ENCODE measurements at regions of chr5 and their contacts with region 1.

Region 1: DNA sequence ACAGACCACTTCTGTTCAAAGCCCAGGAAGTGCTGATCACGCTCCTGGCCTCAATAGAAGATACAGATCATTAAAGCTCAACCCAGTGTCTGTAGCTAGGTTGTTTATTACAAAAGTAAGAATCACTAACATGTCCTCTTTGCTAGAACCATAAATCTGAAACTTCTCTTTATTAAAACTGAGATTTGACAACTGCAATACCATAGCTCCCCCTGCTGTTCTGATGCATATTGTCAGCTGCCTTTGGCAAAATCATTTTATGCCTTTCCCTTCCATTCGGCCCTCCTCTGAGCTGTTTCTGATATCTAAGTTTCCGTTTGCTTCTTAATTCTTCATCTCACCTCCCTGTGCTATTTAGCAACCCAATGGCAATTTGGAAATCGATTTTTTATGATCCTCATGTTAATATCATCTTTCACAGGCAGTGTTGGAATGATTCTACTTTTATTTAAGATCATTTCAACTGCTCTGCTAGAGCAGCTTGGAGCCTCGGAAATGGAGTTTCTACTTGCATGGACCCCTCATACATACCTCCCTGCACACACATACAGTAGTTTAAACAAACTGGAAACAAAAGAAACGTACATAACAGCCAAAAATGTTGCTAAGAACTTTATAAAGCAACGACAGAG is 998.8 kb downstream of the MAT2B start:
- DNase-seq: no peak
- ATAC-seq: no peak
- H3K4me3 ChIP-seq: no peak overlapping the region
- H3K27ac ChIP-seq: no peak overlapping the region
- H3K4me1 ChIP-seq: no peaks in the 10 kb centered on the region
- H3K27me3 ChIP-seq: no peaks in the 10 kb centered on the region

Region 2: DNA sequence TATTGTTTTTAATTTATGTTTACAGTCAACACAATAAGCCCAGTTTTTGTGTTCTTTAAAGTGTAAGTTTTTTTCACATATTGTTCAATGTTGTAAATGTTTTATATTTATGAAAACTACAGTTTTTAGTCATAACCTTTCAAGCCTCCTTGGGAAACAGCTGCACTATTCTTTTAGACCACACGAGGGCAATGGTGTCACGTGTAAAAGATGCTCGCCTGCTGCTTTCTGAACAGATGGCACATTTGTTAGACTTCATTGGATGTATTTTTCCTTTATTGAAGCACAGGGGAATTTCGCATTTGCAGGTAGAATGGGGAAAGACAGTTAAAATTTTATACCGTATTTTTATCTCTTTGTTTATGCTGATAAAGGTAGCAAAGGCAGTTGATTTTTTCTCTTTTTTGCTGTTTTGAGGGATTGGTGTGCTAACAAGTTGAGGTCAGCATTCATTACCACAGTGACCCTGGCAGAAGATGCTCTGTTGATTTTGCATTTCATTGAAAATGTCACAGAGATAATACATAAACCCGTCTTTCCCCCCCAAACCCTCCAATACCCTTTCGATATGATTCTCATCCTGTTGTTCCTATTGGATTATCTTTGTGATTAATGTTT is 939.8 kb before region 1 on chr5:
- intact Hi-C with region 1: loop called in 3 of 4 experiments (anchors 5 to 10 kb)
- DNase-seq: peak in 2 of 3 donors; percentile 22 to 46
- ATAC-seq: peak in 1 of 2 donors; percentile 46
- H3K4me3 ChIP-seq: no peak overlapping the region
- H3K27ac ChIP-seq: no peak overlapping the region
- H3K4me1 ChIP-seq: peaks cover 3% of the 10 kb centered on the region
- H3K27me3 ChIP-seq: no peaks in the 10 kb centered on the region

Region 3: DNA sequence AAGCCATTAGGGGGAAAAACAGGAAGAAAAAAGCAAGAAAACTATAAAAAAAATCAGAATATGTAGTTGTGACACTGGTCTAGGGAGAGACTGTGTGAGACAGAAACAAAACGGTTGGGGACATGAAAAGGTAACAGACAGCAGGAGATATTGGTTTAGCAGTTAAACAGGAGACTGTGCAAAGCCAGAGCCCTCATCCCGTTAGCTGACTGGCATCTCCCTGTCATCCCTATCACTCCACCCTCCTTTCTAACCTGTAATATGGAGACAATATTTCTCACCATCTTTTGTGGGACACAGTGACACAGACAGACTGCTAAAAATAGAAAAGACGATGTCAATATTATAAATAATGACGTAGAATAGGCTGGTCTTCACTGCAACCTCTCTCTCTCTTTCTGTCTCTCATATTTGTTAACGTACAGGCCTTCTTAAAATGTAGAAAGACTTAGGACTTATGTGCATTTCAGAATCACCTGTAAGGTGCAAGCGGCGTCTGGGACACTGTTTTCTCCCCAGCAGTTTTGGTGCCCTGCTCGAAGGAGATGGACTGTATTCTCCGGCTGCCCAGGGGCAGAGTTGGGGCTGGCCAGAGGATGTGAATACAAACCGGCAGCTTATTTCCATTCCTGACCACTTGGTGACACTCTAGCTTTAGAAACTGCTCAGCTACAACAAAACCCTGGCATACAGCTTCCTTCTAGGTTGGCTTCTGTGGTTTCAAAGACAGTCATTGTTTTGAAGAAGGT is 808.3 kb before region 1 on chr5:
- intact Hi-C with region 1: loop called in 2 of 4 experiments (anchors 10 kb)
- DNase-seq: no peak
- ATAC-seq: peak; percentile 71 to 76
- H3K4me3 ChIP-seq: no peak overlapping the region
- H3K27ac ChIP-seq: no peak overlapping the region
- H3K4me1 ChIP-seq: no peaks in the 10 kb centered on the region
- H3K27me3 ChIP-seq: no peaks in the 10 kb centered on the region

Region 4: DNA sequence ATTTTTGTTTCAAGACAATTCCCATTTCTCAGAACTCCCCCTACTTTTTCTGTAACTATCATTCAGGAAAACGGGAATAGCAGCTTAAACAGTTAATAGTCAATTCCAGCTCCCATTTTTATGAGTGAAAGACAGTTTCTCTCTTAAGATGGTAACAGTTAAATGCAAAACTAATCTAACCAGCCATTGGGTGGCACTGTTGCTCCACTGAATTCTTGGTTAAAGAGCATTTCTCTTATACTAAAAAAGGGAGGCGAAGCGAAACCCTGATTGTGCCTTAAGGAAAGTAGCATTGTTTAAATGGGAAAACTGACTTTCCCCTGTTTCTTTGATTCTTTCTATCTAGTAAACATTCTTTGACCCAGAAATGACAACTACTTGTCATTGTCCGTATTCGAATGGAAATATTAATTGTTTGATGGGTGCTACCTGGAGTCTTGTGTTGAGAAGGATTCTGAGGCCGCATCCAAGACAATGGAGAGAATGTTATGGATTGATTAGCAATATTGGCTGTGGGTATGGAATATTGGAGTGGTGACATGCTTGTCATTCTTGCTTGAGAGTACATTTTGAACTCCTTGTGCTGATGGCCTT is 491.1 kb before region 1 on chr5:
- intact Hi-C with region 1: loop called (anchors 5 to 10 kb)
- DNase-seq: peak in 1 of 3 donors; percentile 20
- ATAC-seq: peak in 1 of 2 donors; percentile 40
- H3K4me3 ChIP-seq: no peak overlapping the region
- H3K27ac ChIP-seq: no peak overlapping the region
- H3K4me1 ChIP-seq: no peaks in the 10 kb centered on the region
- H3K27me3 ChIP-seq: no peaks in the 10 kb centered on the region

Region 5: DNA sequence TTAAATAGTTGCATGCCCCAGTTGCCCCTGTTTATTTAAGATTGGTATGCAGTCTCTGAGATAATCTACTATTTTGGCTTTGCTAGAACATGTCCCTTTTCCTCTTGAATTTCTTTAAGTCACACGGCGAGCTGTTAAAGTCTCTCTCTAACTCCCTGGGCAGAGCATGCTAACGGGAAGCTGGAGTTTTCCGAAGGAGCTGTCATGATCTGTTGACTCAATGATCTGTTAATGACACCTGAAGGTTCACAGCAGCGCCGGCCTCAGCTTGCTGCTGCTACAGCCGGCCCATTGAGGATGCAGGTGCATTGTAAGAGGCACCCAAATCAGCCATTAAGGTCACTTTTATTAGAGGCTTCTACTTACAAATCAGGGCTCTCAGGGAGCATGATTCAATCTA is 204.6 kb after region 1 on chr5:
- intact Hi-C with region 1: no loop called
- DNase-seq: no peak
- ATAC-seq: no peak
- H3K4me3 ChIP-seq: no peak overlapping the region
- H3K27ac ChIP-seq: no peak overlapping the region
- H3K4me1 ChIP-seq: no peaks in the 10 kb centered on the region
- H3K27me3 ChIP-seq: no peaks in the 10 kb centered on the region

Measured in right cardiac atrium (tissue), 5 donors.